ENCODE measurements at regions of chr9 and their contacts with region 1.

Region 1: DNA sequence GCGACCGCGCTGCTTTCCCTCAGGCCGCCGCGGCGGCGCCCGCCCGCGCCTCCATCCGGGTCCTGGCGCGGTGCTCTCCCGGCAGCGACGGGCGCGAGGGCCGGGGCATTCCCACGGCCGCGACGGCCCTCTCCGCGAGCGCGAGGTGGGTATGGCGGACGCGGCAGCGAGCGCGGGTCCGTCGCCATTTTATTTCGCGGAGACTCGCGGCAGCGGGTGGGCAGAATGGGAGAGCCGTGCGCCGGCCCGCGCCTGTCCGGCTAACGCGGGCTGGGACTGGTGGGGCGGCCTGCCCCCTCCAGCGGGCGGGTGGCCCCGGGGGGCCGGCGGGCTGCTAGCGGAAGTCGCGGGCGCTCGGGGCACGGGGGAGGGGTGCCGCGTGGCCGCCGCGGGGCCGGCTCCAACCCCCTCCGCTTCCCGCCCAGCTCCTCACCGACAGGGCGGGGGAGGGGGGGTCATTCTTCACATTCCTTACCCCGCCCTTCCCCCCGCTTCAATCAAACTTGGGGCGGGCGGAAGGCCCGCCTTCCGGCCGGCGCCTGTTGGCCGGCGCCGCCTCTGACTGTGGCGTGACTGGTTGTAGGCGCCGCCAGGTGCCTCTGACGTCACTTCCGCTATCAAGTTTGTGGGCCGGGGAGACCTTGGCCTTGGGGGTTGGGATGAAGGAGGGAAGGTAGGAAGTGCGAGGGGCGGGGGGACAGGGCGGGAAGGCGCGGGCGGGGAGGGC is 82.1 kb downstream of the PTPDC1 start:
- DNase-seq: peak; percentile 97
- H3K4me3 Mint-ChIP-seq: peak overlapping the region; percentile 86
- H3K27ac Mint-ChIP-seq: peak overlapping the region; percentile 87
- H3K4me1 Mint-ChIP-seq: peaks cover 41% of the 10 kb centered on the region
- H3K27me3 Mint-ChIP-seq: no peaks in the 10 kb centered on the region

Region 2: GRCh38 chr9:93134015-93134739 is 1032.2 kb before region 1 on chr9 and contains the start of gene NINJ1:
- CTCF ChIA-PET with region 1: no interaction called
- intact Hi-C with region 1: loop called (anchors 5 kb)
- DNase-seq: peak; percentile 96
- H3K4me3 Mint-ChIP-seq: peak within 1 kb of the TSS; percentile 94
- H3K27ac Mint-ChIP-seq: peak within 1 kb of the TSS; percentile 91
- H3K4me1 Mint-ChIP-seq: peaks cover 67% of the 10 kb centered on the region
- H3K27me3 Mint-ChIP-seq: no peaks in the 10 kb centered on the region
- total RNA-seq, gene NINJ1: 93.9 to 96.9 TPM

Region 3: DNA sequence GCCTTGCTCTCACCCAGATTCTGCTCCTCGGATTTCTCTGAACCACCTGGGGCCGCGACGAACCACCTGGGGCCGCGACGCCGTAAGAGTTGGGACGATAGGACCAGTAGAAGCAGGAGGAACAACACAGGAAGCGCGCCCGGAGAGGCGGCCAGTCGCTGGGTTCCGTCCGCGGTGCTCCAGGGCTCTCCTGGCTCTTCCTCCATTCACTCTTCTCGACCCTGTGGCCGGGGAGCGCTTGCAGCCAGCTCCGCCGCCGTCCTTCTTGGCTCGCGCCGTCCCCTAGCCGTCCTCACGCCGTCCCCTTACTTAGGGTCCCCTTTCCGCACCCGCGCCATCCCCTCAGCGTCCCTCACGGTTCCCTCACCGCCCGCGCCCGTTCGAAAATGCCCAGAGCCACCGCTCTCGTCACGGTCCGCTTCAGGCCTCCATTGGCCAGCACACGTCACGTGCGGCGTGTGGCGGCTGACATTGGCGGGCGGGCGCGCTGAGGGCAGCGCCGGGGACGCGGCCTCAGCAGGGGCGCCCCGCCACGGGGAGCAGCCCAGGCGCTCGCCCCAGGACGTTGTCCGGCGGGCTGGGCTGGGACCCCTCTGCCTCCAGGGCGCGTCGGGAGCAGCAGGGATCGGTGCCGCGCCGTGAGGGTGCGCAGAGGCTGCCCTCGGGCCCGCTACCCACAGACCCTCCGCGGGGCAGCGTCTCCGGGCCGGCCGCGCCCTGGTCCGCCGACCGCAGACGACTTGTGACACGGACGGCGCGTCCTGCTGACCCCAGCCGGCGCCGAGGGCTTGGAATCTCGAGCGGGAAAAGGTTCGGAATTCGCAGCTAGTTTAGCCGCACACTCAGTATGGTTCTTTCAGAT is 135.9 kb before region 1 on chr9:
- CTCF ChIA-PET with region 1: no interaction called
- intact Hi-C with region 1: loop called (anchors 2 kb)
- DNase-seq: peak; percentile 84
- H3K4me3 Mint-ChIP-seq: peak overlapping the region; percentile 100
- H3K27ac Mint-ChIP-seq: peak overlapping the region; percentile 96
- H3K4me1 Mint-ChIP-seq: peaks cover 24% of the 10 kb centered on the region
- H3K27me3 Mint-ChIP-seq: peaks cover 2% of the 10 kb centered on the region

Region 4: DNA sequence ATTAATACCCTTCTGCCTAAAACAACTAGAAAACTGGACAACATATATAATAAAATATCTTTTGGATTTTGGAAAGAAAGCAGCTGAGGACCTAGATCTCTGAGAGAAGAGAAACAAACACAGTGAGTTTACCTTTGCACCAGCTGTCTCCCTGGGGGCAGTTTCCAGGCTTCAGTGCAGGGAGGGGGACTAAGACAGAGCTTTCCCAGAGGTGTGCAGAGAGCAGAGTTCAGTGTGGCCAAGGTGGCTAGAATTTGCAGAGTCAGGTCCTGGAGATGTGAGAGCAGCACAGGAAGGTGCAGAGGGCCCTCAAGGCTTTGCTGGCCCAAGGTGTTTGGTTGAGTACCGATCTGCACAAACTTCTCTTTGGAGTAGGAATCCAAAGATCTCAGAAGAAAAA is 108.5 kb before region 1 on chr9:
- CTCF ChIA-PET with region 1: no interaction called
- intact Hi-C with region 1: no loop called
- DNase-seq: no peak
- H3K4me3 Mint-ChIP-seq: no peak overlapping the region
- H3K27ac Mint-ChIP-seq: no peak overlapping the region
- H3K4me1 Mint-ChIP-seq: no peaks in the 10 kb centered on the region
- H3K27me3 Mint-ChIP-seq: no peaks in the 10 kb centered on the region

Region 5: GRCh38 chr9:94259077-94259892 is 92.9 kb after region 1 on chr9 and contains the start of gene ZNF169:
- CTCF ChIA-PET with region 1: no interaction called
- intact Hi-C with region 1: loop called (anchors 1 kb)
- DNase-seq: peak; percentile 95
- H3K4me3 Mint-ChIP-seq: peak within 1 kb of the TSS; percentile 99
- H3K27ac Mint-ChIP-seq: peak within 1 kb of the TSS; percentile 90
- H3K4me1 Mint-ChIP-seq: peaks cover 33% of the 10 kb centered on the region
- H3K27me3 Mint-ChIP-seq: no peaks in the 10 kb centered on the region
- total RNA-seq, gene ZNF169: 4.5 to 5.1 TPM

Region 6: GRCh38 chr9:96009690-96010472 is 1843.5 kb after region 1 on chr9:
- CTCF ChIA-PET with region 1: no interaction called
- intact Hi-C with region 1: loop called (anchors 10 kb)
- DNase-seq: peak; percentile 83
- H3K4me3 Mint-ChIP-seq: no peak overlapping the region
- H3K27ac Mint-ChIP-seq: peak overlapping the region; percentile 73
- H3K4me1 Mint-ChIP-seq: peaks cover 54% of the 10 kb centered on the region
- H3K27me3 Mint-ChIP-seq: no peaks in the 10 kb centered on the region